ENCODE measurements at regions of chr1 and their contacts with region 1.

Region 1: DNA sequence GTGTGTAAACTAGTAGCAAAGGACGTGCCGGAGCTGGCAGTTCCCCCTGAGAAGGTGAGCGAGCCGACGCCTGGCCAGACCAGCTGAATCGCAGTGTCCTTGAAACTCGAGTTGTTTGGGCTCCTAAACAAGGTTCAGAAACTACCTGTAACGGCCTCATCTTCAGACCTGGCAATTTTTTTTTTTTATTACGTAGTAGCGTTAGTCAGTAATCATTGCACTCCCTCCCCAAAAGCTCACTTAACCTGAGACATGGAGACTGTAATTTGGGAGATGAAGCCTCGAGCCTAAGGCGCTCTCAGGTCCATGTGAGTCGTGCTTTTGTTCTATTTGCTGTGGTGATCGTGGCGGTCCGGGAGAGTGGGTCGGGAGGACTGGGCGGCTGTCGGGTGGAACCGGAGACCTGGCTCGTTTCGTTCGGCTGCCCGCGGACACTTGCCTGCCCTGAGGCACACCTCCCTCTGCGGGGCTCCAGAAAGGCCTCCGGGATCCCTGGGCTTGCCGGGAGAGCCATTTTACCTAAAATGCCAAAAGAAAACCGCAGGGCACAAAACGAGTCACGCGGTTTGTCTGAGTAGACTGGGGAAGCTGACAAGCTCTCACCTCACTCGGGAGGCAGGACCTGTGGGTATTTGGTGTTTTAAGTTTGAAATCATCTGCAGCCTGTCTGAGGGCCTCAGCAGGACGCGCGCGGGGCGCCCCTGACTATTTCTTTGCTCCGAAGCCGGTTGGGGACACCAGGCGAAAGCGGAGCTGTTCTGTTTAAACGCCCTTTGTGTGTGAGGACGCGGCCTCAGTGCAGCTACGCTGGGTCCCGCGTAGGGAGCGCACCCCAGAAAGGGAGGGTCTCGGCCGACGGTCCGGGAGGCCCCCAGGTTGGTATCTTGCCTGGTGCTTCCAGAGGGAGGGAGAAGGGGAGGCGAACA is 722 bp downstream of the LHX8 start:
- DNase-seq: peak; percentile 56
- ATAC-seq: peak; percentile 4
- H3K4me3 Mint-ChIP-seq: peak overlapping the region; percentile 95
- H3K27ac Mint-ChIP-seq: no peak overlapping the region
- H3K4me1 Mint-ChIP-seq: peaks cover 69% of the 10 kb centered on the region
- H3K27me3 Mint-ChIP-seq: peaks cover 100% of the 10 kb centered on the region
- CTCF ChIP-seq: no peak

Region 2: GRCh38 chr1:75053207-75053606 is 81.7 kb before region 1 on chr1:
- CTCF ChIA-PET with region 1: interaction called, 18 read pairs
- POLR2A ChIA-PET with region 1: no interaction called
- DNase-seq: no peak
- ATAC-seq: peak; percentile 95
- H3K4me3 Mint-ChIP-seq: no peak overlapping the region
- H3K27ac Mint-ChIP-seq: no peak overlapping the region
- H3K4me1 Mint-ChIP-seq: no peaks in the 10 kb centered on the region
- H3K27me3 Mint-ChIP-seq: no peaks in the 10 kb centered on the region
- CTCF ChIP-seq: 0 out of 2 replicates have a peak, but pooled peaks have one; percentile 15

Region 3: GRCh38 chr1:75067975-75068374 is 66.9 kb before region 1 on chr1:
- CTCF ChIA-PET with region 1: interaction called, 14 read pairs
- POLR2A ChIA-PET with region 1: no interaction called
- DNase-seq: peak; percentile 70
- ATAC-seq: peak; percentile 98
- H3K4me3 Mint-ChIP-seq: no peak overlapping the region
- H3K27ac Mint-ChIP-seq: no peak overlapping the region
- H3K4me1 Mint-ChIP-seq: peaks cover 4% of the 10 kb centered on the region
- H3K27me3 Mint-ChIP-seq: no peaks in the 10 kb centered on the region
- CTCF ChIP-seq: peak; percentile 44; the same call in 1 of the 2 replicates

Region 4: DNA sequence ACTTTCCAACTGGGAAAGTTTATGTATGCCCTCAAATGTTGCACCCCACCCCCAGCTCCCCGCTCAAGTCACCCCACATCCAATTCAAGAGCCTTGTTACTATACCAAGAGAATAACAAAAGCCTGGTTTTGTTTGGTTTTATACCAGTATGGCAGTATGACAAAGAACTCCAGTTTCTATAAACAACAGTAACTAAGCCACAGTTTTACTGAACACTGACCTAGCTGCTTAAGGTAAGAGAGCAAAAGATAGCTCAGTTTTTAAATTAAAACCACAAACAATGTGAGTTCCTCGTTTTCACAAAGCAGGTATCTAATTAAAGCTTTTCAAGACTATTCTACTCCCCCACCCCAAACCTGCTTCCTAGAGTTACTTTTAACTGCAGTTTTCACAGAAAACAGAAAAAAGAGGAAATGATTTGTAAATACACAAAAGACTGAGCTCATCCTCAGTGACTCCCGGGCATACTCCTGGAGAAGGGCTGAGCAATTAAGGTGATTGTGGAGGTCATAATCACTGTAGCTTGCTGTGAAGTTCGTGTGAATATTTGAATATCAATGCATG is 60.0 kb before region 1 on chr1:
- CTCF ChIA-PET with region 1: interaction called, 10 read pairs
- POLR2A ChIA-PET with region 1: interaction called, 6 read pairs
- DNase-seq: no peak
- ATAC-seq: peak; percentile 81
- H3K4me3 Mint-ChIP-seq: peak overlapping the region; percentile 55
- H3K27ac Mint-ChIP-seq: peak overlapping the region; percentile 98
- H3K4me1 Mint-ChIP-seq: peaks cover 72% of the 10 kb centered on the region
- H3K27me3 Mint-ChIP-seq: peaks cover 7% of the 10 kb centered on the region
- CTCF ChIP-seq: no peak

Region 5: GRCh38 chr1:75273110-75273509 is 138.2 kb after region 1 on chr1:
- CTCF ChIA-PET with region 1: no interaction called
- POLR2A ChIA-PET with region 1: no interaction called
- DNase-seq: no peak
- ATAC-seq: no peak
- H3K4me3 Mint-ChIP-seq: no peak overlapping the region
- H3K27ac Mint-ChIP-seq: no peak overlapping the region
- H3K4me1 Mint-ChIP-seq: no peaks in the 10 kb centered on the region
- H3K27me3 Mint-ChIP-seq: no peaks in the 10 kb centered on the region
- CTCF ChIP-seq: no peak